Activated B cell treated with CpG ODN at 0.5 μM for 24 hours (primary cell): ENCODE measurements at regions of chr13 and their contacts with region 1.

Region 1: GRCh38 chr13:102596147-102597028 is at the start of gene TPP2:
- DNase-seq: peak; percentile 97
- ATAC-seq: peak; percentile 92
- H3K4me3 Mint-ChIP-seq: peak within 1 kb of the TSS; percentile 96
- H3K27ac Mint-ChIP-seq: peak within 1 kb of the TSS; percentile 98
- H3K4me1 Mint-ChIP-seq: peaks cover 60% of the 10 kb centered on the region
- H3K27me3 Mint-ChIP-seq: no peaks in the 10 kb centered on the region
- CTCF ChIP-seq: no peak
- total RNA-seq, gene TPP2: 43.7 and 53.1 TPM in 2 replicates

Region 2: GRCh38 chr13:102394158-102395053 is 202.0 kb before region 1 on chr13:
- CTCF ChIA-PET with region 1: no interaction called
- POLR2A ChIA-PET with region 1: interaction called, 9 read pairs
- intact Hi-C with region 1: loop called (anchors 1 kb)
- DNase-seq: peak; percentile 88
- ATAC-seq: peak; percentile 94
- H3K4me3 Mint-ChIP-seq: peak overlapping the region; percentile 87
- H3K27ac Mint-ChIP-seq: peak overlapping the region; percentile 56
- H3K4me1 Mint-ChIP-seq: peaks cover 8% of the 10 kb centered on the region
- H3K27me3 Mint-ChIP-seq: peaks cover 16% of the 10 kb centered on the region
- CTCF ChIP-seq: no peak

Region 3: GRCh38 chr13:102800145-102801041 is 204.0 kb after region 1 on chr13:
- CTCF ChIA-PET with region 1: interaction called, 6 read pairs
- POLR2A ChIA-PET with region 1: interaction called, 9 read pairs
- intact Hi-C with region 1: loop called (anchors 1 kb)
- DNase-seq: peak; percentile 79
- ATAC-seq: peak; percentile 89
- H3K4me3 Mint-ChIP-seq: peak overlapping the region; percentile 85
- H3K27ac Mint-ChIP-seq: no peak overlapping the region
- H3K4me1 Mint-ChIP-seq: peaks cover 18% of the 10 kb centered on the region
- H3K27me3 Mint-ChIP-seq: peaks cover 7% of the 10 kb centered on the region
- CTCF ChIP-seq: no peak